Heart left ventricle (tissue), 16 donors: ENCODE measurements at regions of chr3 and their contacts with region 1.

Region 1: DNA sequence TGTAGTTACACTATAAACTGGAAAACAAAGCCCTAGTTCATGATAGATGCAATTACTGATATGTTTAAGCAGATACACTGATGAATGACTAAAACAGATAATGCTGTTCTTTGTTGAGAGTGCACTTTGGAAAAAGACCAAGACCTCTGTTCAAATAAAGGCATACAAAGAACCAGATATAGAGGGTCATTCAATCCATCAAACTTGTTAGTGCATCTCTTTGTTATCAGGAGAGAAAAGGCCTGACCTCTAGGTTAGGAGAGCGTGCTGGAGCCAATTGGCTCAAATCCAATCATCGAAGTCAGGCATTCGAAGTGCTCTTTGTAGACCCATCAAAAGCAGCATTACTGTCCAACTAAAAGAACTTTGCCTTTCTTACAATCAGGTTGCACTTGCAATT is 124.2 kb downstream of the TFG start:
- DNase-seq: no peak
- ATAC-seq: no peak
- H3K4me3 ChIP-seq: no peak overlapping the region
- H3K27ac ChIP-seq: no peak overlapping the region
- H3K4me1 ChIP-seq: no peaks in the 10 kb centered on the region
- H3K27me3 ChIP-seq: no peaks in the 10 kb centered on the region
- CTCF ChIP-seq: no peak
- POLR2A ChIP-seq: no peak

Region 2: GRCh38 chr3:100811779-100812507 is 21.5 kb before region 1 on chr3:
- intact Hi-C with region 1: no loop called
- DNase-seq: no peak
- ATAC-seq: no peak
- H3K4me3 ChIP-seq: no peak overlapping the region
- H3K27ac ChIP-seq: no peak overlapping the region
- H3K4me1 ChIP-seq: no peaks in the 10 kb centered on the region
- H3K27me3 ChIP-seq: no peaks in the 10 kb centered on the region
- CTCF ChIP-seq: no peak
- POLR2A ChIP-seq: no peak

Region 3: DNA sequence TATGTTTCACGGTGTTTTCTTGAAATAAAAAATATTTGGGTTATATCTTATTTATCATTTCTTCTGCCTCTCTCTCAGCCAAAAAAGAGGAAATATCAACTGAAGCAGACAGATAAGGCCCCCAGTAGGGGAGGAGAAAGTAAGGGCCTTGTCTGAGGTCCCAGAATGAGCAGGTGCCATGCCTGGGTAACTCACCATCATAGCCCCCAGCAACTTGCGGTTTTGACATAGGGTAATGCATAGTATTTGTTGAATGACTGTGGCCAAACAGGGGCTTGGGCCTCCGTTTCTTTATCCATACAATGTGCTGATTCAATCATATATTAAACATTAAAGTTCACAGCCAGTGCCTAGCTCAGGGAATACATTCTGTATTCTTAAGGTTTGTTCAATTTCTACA is 40.1 kb after region 1 on chr3:
- intact Hi-C with region 1: loop called in 1 of 10 experiments (anchors 2 kb)
- DNase-seq: no peak
- ATAC-seq: no peak
- H3K4me3 ChIP-seq: no peak overlapping the region
- H3K27ac ChIP-seq: no peak overlapping the region
- H3K4me1 ChIP-seq: peaks cover 0 to 15% (median 7%) of the 10 kb centered on the region in 12 donors
- H3K27me3 ChIP-seq: no peaks in the 10 kb centered on the region
- CTCF ChIP-seq: no peak
- POLR2A ChIP-seq: no peak

Region 4: DNA sequence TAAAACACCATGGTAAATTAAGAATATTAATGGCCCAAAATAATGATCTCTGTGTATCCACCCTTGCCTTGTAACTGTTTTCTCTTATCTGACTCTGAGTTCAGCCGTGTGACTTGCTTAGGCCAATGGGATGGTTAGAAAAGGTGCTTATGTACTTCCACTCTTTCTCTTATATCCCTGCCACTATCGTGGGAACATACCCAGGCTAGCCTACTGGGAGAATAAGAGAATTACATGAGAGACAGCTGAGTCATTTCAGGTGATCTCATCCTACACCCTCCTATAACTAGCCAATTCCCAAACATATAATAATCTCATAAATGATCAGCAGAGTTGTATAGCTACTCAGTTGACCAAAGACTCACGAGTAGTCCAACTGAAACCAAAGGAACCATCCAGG is 258.0 kb after region 1 on chr3:
- intact Hi-C with region 1: no loop called
- DNase-seq: no peak
- ATAC-seq: no peak
- H3K4me3 ChIP-seq: no peak overlapping the region
- H3K27ac ChIP-seq: no peak overlapping the region
- H3K4me1 ChIP-seq: peaks cover 0 to 3% (median 0%) of the 10 kb centered on the region in 12 donors
- H3K27me3 ChIP-seq: no peaks in the 10 kb centered on the region
- CTCF ChIP-seq: no peak
- POLR2A ChIP-seq: no peak